ENCODE measurements at regions of chr4 and their contacts with region 1.

Region 1: DNA sequence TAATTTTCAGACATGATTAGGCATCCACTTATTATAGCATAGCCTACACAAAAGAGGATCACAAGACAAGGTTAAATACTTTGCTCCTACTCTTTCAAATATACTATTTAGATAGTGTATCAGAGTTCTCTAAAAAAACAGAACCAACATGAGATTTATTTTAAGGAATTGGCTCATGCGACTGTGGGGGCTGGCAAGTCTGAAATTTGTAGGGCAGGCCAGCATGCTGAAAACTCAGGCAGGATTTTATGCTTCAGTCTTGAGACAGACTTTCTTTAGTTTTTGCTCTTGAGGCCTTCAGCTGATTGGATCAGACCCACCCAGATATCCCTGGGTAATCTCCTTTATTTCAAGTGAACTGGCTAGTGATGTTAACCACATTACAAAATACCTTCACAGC is 169.5 kb downstream of the MAML3 start:
- DNase-seq: no peak
- H3K4me3 ChIP-seq: no peak overlapping the region
- H3K27ac ChIP-seq: peak overlapping the region; percentile 53 to 62
- H3K4me1 ChIP-seq: peaks cover 7 to 33% of the 10 kb centered on the region in 2 donors
- H3K27me3 ChIP-seq: no peaks in the 10 kb centered on the region
- CTCF ChIP-seq: no peak

Region 2: GRCh38 chr4:139913398-139913990 is 71.0 kb before region 1 on chr4:
- intact Hi-C with region 1: no loop called
- DNase-seq: no peak
- H3K4me3 ChIP-seq: peak overlapping the region; percentile 21 to 32
- H3K27ac ChIP-seq: peak overlapping the region in 1 of 2 donors; percentile 53
- H3K4me1 ChIP-seq: peaks cover 0 to 26% of the 10 kb centered on the region in 2 donors
- H3K27me3 ChIP-seq: no peaks in the 10 kb centered on the region
- CTCF ChIP-seq: no peak

Region 3: DNA sequence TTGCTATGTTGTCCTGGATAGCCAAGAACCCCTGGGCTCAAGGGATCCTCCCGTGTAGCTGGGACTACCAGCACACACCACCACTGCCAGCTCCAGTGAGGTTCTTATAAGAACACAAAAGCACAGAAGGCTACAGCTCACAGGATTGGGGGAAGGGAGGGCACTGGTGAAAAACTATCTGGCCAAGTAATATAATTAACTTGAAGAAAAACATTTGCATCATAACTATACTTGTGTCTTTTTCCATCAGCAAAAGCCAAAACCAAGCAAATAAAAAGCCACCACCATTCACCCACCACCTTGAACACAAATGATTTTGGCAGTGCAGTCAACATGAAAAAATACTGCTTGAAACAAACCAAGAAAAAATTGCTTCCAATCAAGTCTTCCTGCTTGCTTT is 18.7 kb before region 1 on chr4:
- intact Hi-C with region 1: loop called (anchors 2 kb)
- DNase-seq: no peak
- H3K4me3 ChIP-seq: no peak overlapping the region
- H3K27ac ChIP-seq: peak overlapping the region; percentile 24 to 52
- H3K4me1 ChIP-seq: peaks cover 0 to 30% of the 10 kb centered on the region in 2 donors
- H3K27me3 ChIP-seq: no peaks in the 10 kb centered on the region
- CTCF ChIP-seq: no peak